Activated CD4-positive, alpha-beta T cell treated with anti-CD3 and anti-CD28 coated beads for 36 hours (primary cell): ENCODE measurements at regions of chr16 and their contacts with region 1.

Region 1: DNA sequence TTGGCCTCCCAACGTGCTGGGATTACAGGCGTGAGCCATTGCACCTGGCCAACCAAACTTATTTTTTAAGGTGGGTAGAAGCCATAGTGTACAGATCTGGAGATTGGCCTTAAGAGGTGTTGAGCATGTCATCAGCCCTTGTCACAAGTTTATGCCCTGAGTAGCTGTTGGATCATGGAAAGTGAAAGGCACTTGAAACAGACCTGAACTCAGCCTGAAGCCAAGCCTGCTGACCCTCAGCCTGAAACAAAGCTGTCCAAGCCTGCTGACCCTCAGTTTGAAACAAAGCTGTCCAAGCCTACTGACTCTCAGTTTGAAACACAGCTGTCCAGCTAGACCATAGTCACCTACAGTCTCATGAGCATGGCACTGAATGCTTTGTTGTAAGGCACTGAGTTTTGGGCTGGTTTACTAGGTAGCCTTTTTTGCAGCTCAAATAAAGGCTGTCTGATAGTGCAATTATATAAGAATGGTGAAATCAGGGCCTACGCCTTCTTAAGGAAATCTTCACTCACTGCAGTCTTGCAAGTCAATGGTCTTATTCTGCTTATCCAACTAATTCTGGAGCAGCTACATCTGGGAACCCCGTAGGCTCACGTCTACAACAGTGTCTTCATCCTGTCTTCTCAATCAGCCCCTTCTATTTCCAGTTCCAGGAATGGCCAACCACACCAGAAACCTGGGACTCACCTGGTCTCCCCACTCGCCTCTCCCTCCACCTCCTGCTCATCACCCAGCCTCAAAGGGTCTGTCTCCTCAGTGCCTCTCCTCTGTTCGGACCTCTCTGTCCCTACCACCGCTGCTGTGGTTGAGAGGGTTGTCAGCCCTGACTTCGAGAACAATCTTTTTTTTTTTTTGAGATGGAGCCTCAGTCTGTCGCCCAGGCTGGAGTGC is 2.9 kb upstream of the NPIPB15 start:
- DNase-seq: no peak
- ATAC-seq: no peak
- H3K4me3 Mint-ChIP-seq: no peak overlapping the region
- H3K27ac Mint-ChIP-seq: no peak overlapping the region
- H3K4me1 Mint-ChIP-seq: no peaks in the 10 kb centered on the region
- H3K27me3 Mint-ChIP-seq: no peaks in the 10 kb centered on the region

Region 2: GRCh38 chr16:74026373-74027281 is 346.6 kb before region 1 on chr16:
- CTCF ChIA-PET with region 1: no interaction called
- POLR2A ChIA-PET with region 1: no interaction called
- intact Hi-C with region 1: no loop called
- DNase-seq: no peak
- ATAC-seq: no peak
- H3K4me3 Mint-ChIP-seq: no peak overlapping the region
- H3K27ac Mint-ChIP-seq: no peak overlapping the region
- H3K4me1 Mint-ChIP-seq: no peaks in the 10 kb centered on the region
- H3K27me3 Mint-ChIP-seq: peaks cover 4% of the 10 kb centered on the region

Region 3: GRCh38 chr16:74438492-74439041 is 65.4 kb after region 1 on chr16:
- CTCF ChIA-PET with region 1: no interaction called
- POLR2A ChIA-PET with region 1: no interaction called
- intact Hi-C with region 1: loop called in 1 of 2 experiments (anchors 10 kb)
- DNase-seq: no peak
- ATAC-seq: peak; percentile 82
- H3K4me3 Mint-ChIP-seq: no peak overlapping the region
- H3K27ac Mint-ChIP-seq: peak overlapping the region; percentile 77
- H3K4me1 Mint-ChIP-seq: peaks cover 16% of the 10 kb centered on the region
- H3K27me3 Mint-ChIP-seq: no peaks in the 10 kb centered on the region

Region 4: GRCh38 chr16:74606521-74607310 is 233.5 kb after region 1 on chr16 and contains the start of gene GLG1:
- CTCF ChIA-PET with region 1: no interaction called
- POLR2A ChIA-PET with region 1: interaction called, 4 read pairs
- intact Hi-C with region 1: loop called (anchors 1 to 5 kb)
- DNase-seq: peak; percentile 95
- ATAC-seq: peak; percentile 87
- H3K4me3 Mint-ChIP-seq: peak within 1 kb of the TSS; percentile 87
- H3K27ac Mint-ChIP-seq: peak within 1 kb of the TSS; percentile 93
- H3K4me1 Mint-ChIP-seq: peaks cover 57% of the 10 kb centered on the region
- H3K27me3 Mint-ChIP-seq: no peaks in the 10 kb centered on the region
- total RNA-seq, gene GLG1: 66.3 to 68.3 TPM